ENCODE measurements at regions of chr6 and their contacts with region 1.

Region 1: DNA sequence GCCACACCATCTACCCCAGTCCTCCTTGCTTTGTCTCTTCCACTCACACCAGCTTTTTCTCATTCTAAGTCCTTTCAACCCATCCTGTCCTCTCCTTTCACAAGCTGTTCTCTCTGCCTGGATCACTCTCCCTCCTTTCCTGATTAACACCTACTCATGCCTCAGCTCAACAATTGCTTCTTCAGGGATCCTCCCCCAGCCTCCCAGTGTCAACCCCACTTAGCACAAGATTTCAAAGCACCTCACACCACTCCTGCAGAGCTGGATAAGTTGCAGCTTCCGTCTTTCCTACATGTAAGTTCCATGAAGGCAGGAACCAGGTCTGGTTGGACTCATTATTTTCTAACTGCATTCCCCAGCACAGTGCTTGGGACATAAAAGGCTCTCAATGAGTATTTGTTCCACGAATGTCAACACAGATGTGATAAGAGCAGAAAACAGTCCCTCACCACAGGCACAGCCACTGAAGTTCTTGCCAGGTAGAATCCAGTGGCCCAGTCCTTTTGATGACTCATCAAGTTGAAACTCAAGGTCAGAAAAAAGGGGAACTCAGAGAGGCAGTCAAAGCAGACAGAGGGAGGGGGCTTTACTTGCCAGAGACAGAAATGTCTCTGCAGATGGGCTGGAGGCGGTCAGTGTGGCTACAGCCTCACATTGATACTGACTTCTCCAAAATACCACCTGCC is 193.4 kb upstream of the PRDM1 start:
- DNase-seq: peak; percentile 68
- CTCF ChIP-seq: no peak

Region 2: GRCh38 chr6:105875974-105876640 is 16.6 kb before region 1 on chr6:
- CTCF ChIA-PET with region 1: no interaction called
- POLR2A ChIA-PET with region 1: interaction called, 12 read pairs
- DNase-seq: no peak
- CTCF ChIP-seq: no peak

Region 3: DNA sequence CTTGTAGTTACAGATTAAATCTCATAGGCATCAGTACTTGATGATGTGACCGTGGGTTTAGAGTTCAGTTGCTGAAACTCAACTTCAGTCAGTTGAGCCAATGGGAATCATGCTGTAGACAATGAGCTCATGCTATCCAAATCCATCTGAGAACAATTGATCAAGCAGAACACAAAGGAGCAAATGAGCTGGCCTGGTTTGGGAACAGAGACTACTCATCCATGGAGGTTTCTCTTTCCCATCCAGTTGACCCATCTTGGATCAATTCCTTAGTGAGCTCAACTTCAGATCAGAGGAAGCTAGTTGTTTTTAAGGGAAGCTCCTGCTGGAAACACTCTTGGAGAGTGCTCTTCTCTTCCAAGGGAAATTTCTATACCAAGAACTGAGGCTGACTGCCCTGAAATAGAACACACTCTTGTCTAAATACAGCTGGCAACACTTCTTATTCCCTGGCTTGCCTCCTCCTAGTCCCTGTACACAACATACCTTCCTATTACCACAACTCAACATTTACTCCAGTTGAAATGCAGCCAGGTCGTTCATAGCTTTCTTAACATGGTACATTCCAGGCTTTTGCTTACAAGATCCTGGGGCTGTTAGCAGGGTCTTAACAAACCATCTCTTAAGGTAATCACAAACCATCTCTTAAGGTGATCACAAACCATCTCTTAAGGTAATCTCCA is 10.5 kb before region 1 on chr6:
- CTCF ChIA-PET with region 1: interaction called, 20 read pairs
- POLR2A ChIA-PET with region 1: no interaction called
- DNase-seq: no peak
- CTCF ChIP-seq: no peak

Region 4: DNA sequence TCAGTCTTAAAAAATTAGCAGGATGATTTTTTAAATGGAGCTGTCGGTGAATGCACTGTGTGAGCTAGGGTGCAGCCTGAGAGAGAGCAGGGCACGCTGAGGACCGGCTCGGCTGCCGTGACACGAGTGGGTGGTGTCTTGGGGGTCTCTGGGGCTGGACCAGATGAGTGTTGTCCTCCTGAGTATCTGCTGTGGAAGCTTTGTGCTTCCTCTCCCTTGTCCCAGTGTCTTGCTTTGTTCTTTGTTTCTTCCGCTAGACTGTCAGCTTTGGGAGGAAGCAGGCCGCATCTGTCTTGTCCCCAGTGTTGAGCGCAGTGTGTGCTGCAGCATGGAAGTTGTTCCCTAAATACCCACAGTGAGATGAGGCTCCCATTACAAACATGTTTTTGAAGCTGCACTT is 647.2 kb after region 1 on chr6:
- CTCF ChIA-PET with region 1: no interaction called
- POLR2A ChIA-PET with region 1: no interaction called
- DNase-seq: no peak
- CTCF ChIP-seq: no peak